ENCODE measurements at regions of chr15 and their contacts with region 1.

Region 1: GRCh38 chr15:74036271-74037170 is 42.0 kb downstream of the PML start:
- DNase-seq: no peak
- ATAC-seq: no peak
- H3K4me3 ChIP-seq: no peak overlapping the region
- H3K27ac ChIP-seq: no peak overlapping the region
- H3K4me1 ChIP-seq: no peaks in the 10 kb centered on the region
- H3K27me3 ChIP-seq: no peaks in the 10 kb centered on the region

Region 2: DNA sequence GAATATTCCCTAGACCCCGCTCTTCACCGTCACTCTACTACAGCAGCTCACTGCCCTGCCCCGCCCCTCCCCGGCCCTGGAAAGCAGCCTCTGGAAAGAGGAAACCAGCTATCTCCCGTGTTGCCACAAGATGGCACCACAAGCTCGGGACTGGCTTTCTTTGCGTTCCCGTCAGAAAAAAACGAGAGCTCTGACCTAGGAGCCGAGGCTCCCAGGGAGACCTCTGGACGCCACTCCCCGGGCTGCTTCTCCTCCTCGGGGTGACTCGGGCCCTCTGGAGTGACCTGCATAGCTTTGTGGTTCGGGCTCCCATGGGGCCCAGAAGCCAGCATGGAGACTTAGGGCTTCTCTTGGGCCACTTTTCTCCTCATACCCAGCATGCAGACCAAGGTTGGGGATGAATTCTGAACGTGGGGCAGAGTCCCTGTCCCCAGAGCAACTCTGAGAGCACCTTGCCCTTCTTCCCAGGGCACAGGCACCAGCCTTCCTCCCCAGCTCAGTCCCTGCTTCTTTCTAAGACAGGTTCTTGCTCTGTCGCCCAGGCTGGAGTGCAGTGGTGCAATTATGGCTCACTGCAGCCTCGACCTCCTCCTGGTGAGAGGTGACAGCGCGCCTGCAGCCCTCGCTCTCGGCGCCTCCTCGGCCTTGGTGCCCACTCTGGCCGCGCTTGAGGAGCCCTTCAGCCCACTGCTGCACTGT is 63.4 kb before region 1 on chr15:
- intact Hi-C with region 1: loop called in 1 of 2 experiments (anchors 5 kb)
- DNase-seq: peak; percentile 90 to 95
- ATAC-seq: peak; percentile 91
- H3K4me3 ChIP-seq: no peak overlapping the region
- H3K27ac ChIP-seq: no peak overlapping the region
- H3K4me1 ChIP-seq: no peaks in the 10 kb centered on the region
- H3K27me3 ChIP-seq: no peaks in the 10 kb centered on the region

Region 3: GRCh38 chr15:73991726-73992593 is 44.6 kb before region 1 on chr15 and contains the start of gene STOML1:
- intact Hi-C with region 1: loop called in 1 of 2 experiments (anchors 2 kb)
- DNase-seq: peak; percentile 96 to 99
- ATAC-seq: peak; percentile 92
- H3K4me3 ChIP-seq: peak within 1 kb of the TSS; percentile 57 to 85
- H3K27ac ChIP-seq: peak within 1 kb of the TSS; percentile 30 to 86
- H3K4me1 ChIP-seq: no peaks in the 10 kb centered on the region
- H3K27me3 ChIP-seq: no peaks in the 10 kb centered on the region
- total RNA-seq, gene STOML1: 12.9 to 16.4 TPM

Region 4: DNA sequence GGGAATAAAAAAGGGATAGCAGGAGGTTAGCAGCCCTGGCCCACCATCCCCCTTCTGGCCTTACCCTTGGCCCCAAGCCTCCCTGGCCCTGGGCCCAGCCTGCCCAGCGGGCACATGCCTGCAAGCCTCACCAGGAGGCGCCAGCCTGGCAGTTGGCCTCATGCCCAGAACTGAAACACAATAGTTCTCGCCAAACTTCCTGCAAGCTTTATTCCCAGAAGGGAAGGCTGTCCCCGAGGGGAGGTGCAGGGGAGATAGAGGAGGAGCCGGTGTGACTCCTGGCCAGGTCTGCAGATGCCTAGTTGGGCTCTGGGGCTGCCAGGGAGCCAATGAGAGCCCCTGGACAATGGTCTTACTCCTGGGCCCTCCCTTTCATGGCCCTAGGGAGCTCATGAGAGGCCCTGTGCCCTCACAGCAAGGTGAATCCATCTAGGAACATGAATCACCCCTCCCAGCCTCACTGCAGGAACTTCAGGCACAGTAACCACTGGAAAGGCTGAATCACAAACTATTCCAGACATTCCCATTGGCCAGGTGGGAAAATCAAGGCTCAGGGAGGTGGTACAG is 203.6 kb after region 1 on chr15:
- intact Hi-C with region 1: loop called in 1 of 2 experiments (anchors 10 kb)
- DNase-seq: peak; percentile 94
- ATAC-seq: peak; percentile 79
- H3K4me3 ChIP-seq: no peak overlapping the region
- H3K27ac ChIP-seq: no peak overlapping the region
- H3K4me1 ChIP-seq: no peaks in the 10 kb centered on the region
- H3K27me3 ChIP-seq: no peaks in the 10 kb centered on the region

Measured in aorta (tissue), 5 donors.